Right ventricle myocardium inferior (tissue), 1 donor: ENCODE measurements at regions of chr12 and their contacts with region 1.

Region 1: GRCh38 chr12:42482445-42483237 is 106.9 kb downstream of the PRICKLE1 start:
- DNase-seq: peak; percentile 85
- ATAC-seq: peak; percentile 91

Region 2: GRCh38 chr12:42144408-42145196 is 338.0 kb before region 1 on chr12 and contains the start of gene GXYLT1:
- intact Hi-C with region 1: loop called (anchors 5 kb)
- DNase-seq: peak; percentile 96
- ATAC-seq: peak; percentile 99
- total RNA-seq, gene GXYLT1: 4.8 TPM

Region 3: GRCh38 chr12:42568952-42569915 is 86.6 kb after region 1 on chr12:
- intact Hi-C with region 1: loop called (anchors 1 kb)
- DNase-seq: no peak
- ATAC-seq: peak; percentile 71

Region 4: DNA sequence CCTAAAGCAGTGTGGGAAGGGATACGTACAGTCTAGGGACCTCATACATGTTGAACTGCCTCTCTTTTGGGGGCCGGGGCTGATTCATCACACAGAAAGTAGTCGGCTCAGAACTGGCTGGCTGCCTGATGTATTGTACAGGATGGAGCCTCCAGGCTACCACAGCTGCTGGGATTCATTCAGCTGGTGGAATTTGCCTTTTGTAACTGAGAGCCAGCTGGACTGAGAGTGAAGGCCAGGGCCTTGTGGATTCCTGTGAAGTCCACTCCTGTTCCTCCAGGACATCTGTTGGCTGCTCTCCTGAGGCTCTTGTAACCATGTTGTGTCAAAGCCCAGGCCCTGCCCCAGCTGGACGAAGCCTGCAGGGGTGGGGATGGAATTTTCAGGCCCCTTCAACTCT is 223.2 kb after region 1 on chr12:
- intact Hi-C with region 1: loop called (anchors 10 kb)
- DNase-seq: peak; percentile 86
- ATAC-seq: peak; percentile 97

Region 5: GRCh38 chr12:43282106-43282505 is 799.5 kb after region 1 on chr12:
- intact Hi-C with region 1: loop called (anchors 5 kb)
- DNase-seq: no peak
- ATAC-seq: no peak